Natural killer cell (primary cell): ENCODE measurements at regions of chr6 and their contacts with region 1.

Region 1: GRCh38 chr6:52664186-52664990 is 6.5 kb upstream of the TMEM14A start:
- DNase-seq: peak; percentile 33 to 67
- ATAC-seq: peak; percentile 79 to 87 (median 80)
- H3K4me3 ChIP-seq: peak overlapping the region; percentile 42
- H3K4me3 Mint-ChIP-seq: no peak overlapping the region
- H3K27ac ChIP-seq: no peak overlapping the region
- H3K27ac Mint-ChIP-seq: no peak overlapping the region
- H3K4me1 ChIP-seq: peaks cover 11% of the 10 kb centered on the region
- H3K4me1 Mint-ChIP-seq: peaks cover 0 to 3% of the 10 kb centered on the region in 2 donors
- H3K27me3 ChIP-seq: peaks cover 4% of the 10 kb centered on the region
- H3K27me3 Mint-ChIP-seq: peaks cover 0 to 5% of the 10 kb centered on the region in 2 donors
- CTCF ChIP-seq: no peak

Region 2: DNA sequence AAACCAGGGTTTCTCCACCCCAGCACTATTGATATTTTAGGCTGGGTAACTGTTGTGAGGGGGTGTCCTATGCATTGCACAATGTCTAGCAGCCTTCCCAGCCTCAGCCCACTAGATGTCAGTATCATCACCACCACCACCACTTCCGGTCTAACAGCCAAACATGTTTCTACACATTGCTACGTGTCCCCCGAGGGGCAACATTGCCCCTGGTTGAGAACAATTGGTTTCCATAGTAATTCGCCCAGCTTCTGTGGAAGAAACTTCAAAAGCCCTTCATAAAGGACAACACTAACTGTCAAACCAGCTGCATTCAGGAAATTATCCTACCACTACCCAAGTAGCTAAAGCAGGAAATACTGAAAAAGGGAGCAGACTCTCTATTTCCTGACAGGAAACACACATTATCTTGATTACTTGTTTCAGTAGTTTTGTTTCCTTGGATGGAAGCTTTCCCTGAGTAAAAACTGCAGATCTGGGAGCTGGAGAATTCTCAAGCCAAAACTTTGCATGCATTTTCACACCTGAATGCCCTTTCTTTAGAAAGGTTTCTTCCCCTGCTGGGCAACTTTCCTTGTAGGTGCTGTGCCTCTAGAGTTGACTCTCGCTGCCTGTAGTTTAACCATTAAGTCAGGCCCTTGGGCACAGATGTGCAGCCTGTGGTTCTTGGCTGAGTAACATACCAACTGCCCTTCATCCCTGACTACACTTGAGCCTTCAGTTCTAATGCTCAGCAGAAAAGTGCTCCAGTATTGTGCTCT is 600.6 kb before region 1 on chr6:
- intact Hi-C with region 1: loop called (anchors 10 kb)
- DNase-seq: peak; percentile 44 to 80
- ATAC-seq: peak; percentile 91 to 99 (median 97)
- H3K4me3 ChIP-seq: peak overlapping the region; percentile 21
- H3K4me3 Mint-ChIP-seq: peak overlapping the region; percentile 64
- H3K27ac ChIP-seq: no peak overlapping the region
- H3K27ac Mint-ChIP-seq: peak overlapping the region in 1 of 2 donors; percentile 43
- H3K4me1 ChIP-seq: peaks cover 11% of the 10 kb centered on the region
- H3K4me1 Mint-ChIP-seq: peaks cover 13% of the 10 kb centered on the region in 2 donors
- H3K27me3 ChIP-seq: peaks cover 4% of the 10 kb centered on the region
- H3K27me3 Mint-ChIP-seq: peaks cover 17 to 21% of the 10 kb centered on the region in 2 donors
- CTCF ChIP-seq: peak; percentile 57

Region 3: GRCh38 chr6:52162940-52163908 is 501.2 kb before region 1 on chr6:
- intact Hi-C with region 1: loop called (anchors 5 kb)
- DNase-seq: peak in 1 of 2 donors; percentile 67
- ATAC-seq: peak in 2 of 3 donors; percentile 42 to 64
- H3K4me3 ChIP-seq: no peak overlapping the region
- H3K4me3 Mint-ChIP-seq: no peak overlapping the region
- H3K27ac ChIP-seq: no peak overlapping the region
- H3K27ac Mint-ChIP-seq: no peak overlapping the region
- H3K4me1 ChIP-seq: no peaks in the 10 kb centered on the region
- H3K4me1 Mint-ChIP-seq: no peaks in the 10 kb centered on the region
- H3K27me3 ChIP-seq: peaks cover 16% of the 10 kb centered on the region
- H3K27me3 Mint-ChIP-seq: peaks cover 18 to 85% of the 10 kb centered on the region in 2 donors
- CTCF ChIP-seq: peak; percentile 45

Region 4: GRCh38 chr6:52333840-52334200 is 330.6 kb before region 1 on chr6:
- intact Hi-C with region 1: no loop called
- DNase-seq: peak in 1 of 2 donors; percentile 68
- ATAC-seq: peak; percentile 85 to 97 (median 93)
- H3K4me3 ChIP-seq: no peak overlapping the region
- H3K4me3 Mint-ChIP-seq: peak overlapping the region; percentile 82
- H3K27ac ChIP-seq: peak overlapping the region; percentile 87
- H3K27ac Mint-ChIP-seq: peak overlapping the region; percentile 93 to 96
- H3K4me1 ChIP-seq: peaks cover 30% of the 10 kb centered on the region
- H3K4me1 Mint-ChIP-seq: peaks cover 44 to 58% of the 10 kb centered on the region in 2 donors
- H3K27me3 ChIP-seq: no peaks in the 10 kb centered on the region
- H3K27me3 Mint-ChIP-seq: no peaks in the 10 kb centered on the region
- CTCF ChIP-seq: no peak

Region 5: GRCh38 chr6:52419809-52420670 is 244.3 kb before region 1 on chr6 and contains the start of gene EFHC1:
- intact Hi-C with region 1: loop called (anchors 1 kb)
- DNase-seq: peak; percentile 97 to 100
- ATAC-seq: peak; percentile 91 to 98 (median 93)
- H3K4me3 ChIP-seq: peak within 1 kb of the TSS; percentile 87
- H3K4me3 Mint-ChIP-seq: no peak within 1 kb of the TSS
- H3K27ac ChIP-seq: peak within 1 kb of the TSS; percentile 71
- H3K27ac Mint-ChIP-seq: no peak within 1 kb of the TSS
- H3K4me1 ChIP-seq: peaks cover 15% of the 10 kb centered on the region
- H3K4me1 Mint-ChIP-seq: no peaks in the 10 kb centered on the region
- H3K27me3 ChIP-seq: no peaks in the 10 kb centered on the region
- H3K27me3 Mint-ChIP-seq: peaks cover 0 to 7% of the 10 kb centered on the region in 2 donors
- CTCF ChIP-seq: no peak
- total RNA-seq, gene EFHC1: 10.7 to 20.9 (median 13.7) TPM

Region 6: DNA sequence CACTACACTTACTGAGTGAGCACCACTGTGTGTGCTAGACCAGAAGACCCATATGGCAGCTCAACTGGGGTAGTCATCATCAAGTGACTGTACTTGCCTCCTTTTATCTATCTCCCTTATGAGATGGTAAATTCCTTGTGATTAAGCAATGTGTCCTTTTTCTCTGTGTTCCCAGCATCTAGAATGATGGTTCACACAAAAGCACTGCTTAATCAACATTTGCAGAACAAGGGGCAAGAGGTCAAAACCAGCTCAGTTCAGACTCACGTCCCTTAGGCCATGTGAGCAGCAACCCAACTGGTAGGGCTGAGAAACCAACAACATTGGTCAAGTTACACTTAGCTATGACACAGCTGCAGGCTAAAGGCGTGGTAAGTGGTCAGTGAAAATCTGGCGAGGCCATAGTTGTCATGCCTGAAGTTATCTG is 97.5 kb before region 1 on chr6:
- intact Hi-C with region 1: no loop called
- DNase-seq: no peak
- ATAC-seq: no peak
- H3K4me3 ChIP-seq: no peak overlapping the region
- H3K4me3 Mint-ChIP-seq: no peak overlapping the region
- H3K27ac ChIP-seq: no peak overlapping the region
- H3K27ac Mint-ChIP-seq: peak overlapping the region in 1 of 2 donors; percentile 13
- H3K4me1 ChIP-seq: peaks cover 8% of the 10 kb centered on the region
- H3K4me1 Mint-ChIP-seq: peaks cover 59 to 74% of the 10 kb centered on the region in 2 donors
- H3K27me3 ChIP-seq: no peaks in the 10 kb centered on the region
- H3K27me3 Mint-ChIP-seq: no peaks in the 10 kb centered on the region
- CTCF ChIP-seq: no peak

Region 7: GRCh38 chr6:52577022-52577777 is 87.2 kb before region 1 on chr6 and contains the start of gene TRAM2:
- intact Hi-C with region 1: loop called (anchors 2 kb)
- DNase-seq: peak; percentile 74 to 89
- ATAC-seq: peak; percentile 70 to 87 (median 77)
- H3K4me3 ChIP-seq: peak within 1 kb of the TSS; percentile 65
- H3K4me3 Mint-ChIP-seq: peak within 1 kb of the TSS; percentile 89
- H3K27ac ChIP-seq: peak within 1 kb of the TSS; percentile 65
- H3K27ac Mint-ChIP-seq: peak within 1 kb of the TSS; percentile 87 to 91
- H3K4me1 ChIP-seq: peaks cover 40% of the 10 kb centered on the region
- H3K4me1 Mint-ChIP-seq: peaks cover 43 to 45% of the 10 kb centered on the region in 2 donors
- H3K27me3 ChIP-seq: no peaks in the 10 kb centered on the region
- H3K27me3 Mint-ChIP-seq: no peaks in the 10 kb centered on the region
- CTCF ChIP-seq: no peak
- total RNA-seq, gene TRAM2: 16.2 to 20.0 (median 19.2) TPM

Region 8: DNA sequence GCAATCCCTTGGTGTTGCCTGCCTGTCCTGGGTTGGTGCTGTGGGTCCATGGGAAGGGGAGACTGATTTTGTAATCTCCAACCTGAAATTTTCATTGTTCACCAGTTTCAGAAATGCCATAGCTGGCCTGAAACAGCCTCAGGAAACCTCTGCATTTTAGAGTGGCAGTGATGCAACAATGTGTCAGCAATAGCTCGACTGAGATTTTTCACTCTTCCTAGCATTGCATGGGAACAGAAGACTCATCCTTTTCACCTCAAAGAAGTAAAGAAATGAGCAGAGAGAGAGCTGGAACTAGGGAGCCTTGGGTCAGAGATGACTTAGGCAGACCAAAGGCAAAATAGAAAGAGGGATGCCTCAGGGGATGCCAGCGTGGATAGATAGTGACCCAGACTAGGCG is 17.2 kb before region 1 on chr6:
- intact Hi-C with region 1: loop called (anchors 1 kb)
- DNase-seq: no peak
- ATAC-seq: no peak
- H3K4me3 ChIP-seq: no peak overlapping the region
- H3K4me3 Mint-ChIP-seq: no peak overlapping the region
- H3K27ac ChIP-seq: no peak overlapping the region
- H3K27ac Mint-ChIP-seq: no peak overlapping the region
- H3K4me1 ChIP-seq: no peaks in the 10 kb centered on the region
- H3K4me1 Mint-ChIP-seq: peaks cover 5 to 6% of the 10 kb centered on the region in 2 donors
- H3K27me3 ChIP-seq: peaks cover 2% of the 10 kb centered on the region
- H3K27me3 Mint-ChIP-seq: peaks cover 9 to 14% of the 10 kb centered on the region in 2 donors
- CTCF ChIP-seq: no peak